ENCODE measurements at regions of chr1 and their contacts with region 1.

Region 1: GRCh38 chr1:84772428-84772943 is 82.2 kb upstream of the SSX2IP start:
- DNase-seq: no peak
- ATAC-seq: peak; percentile 96
- H3K4me3 ChIP-seq: no peak overlapping the region
- H3K27ac ChIP-seq: no peak overlapping the region
- H3K4me1 ChIP-seq: no peaks in the 10 kb centered on the region
- H3K27me3 ChIP-seq: no peaks in the 10 kb centered on the region
- CTCF ChIP-seq: peak; percentile 78 to 89 (median 87)
- EP300 ChIP-seq: no peak
- POLR2A ChIP-seq: no peak
- RAD21 ChIP-seq: peak; percentile 93

Region 2: DNA sequence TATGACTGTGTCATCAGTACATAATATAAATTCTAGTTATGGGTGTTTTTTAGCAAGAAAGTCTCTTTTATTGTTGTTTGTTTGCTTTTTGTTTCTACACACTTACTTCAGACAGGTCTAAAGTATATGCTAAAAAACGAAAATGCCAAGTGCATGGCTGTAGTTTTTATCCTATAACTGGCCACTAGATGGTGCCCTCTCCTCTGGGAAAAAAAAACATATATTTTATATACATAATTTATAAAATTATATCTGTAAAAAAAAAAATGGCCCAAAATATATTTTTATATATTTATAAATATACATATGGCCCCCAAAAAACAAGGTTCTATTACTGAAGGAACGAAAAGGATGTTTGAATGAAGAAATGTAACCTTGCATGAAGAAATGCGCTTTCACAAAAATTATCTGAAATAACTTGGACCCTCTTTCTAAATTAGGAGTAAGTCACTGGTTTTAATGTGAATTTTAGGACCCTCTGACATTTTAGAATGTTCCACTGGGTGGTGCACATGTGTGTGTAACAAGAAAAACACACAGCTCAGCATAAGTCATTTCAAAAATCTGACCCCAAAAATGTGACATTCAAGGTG is 867.1 kb before region 1 on chr1:
- CTCF ChIA-PET with region 1: no interaction called
- POLR2A ChIA-PET with region 1: no interaction called
- RAD21 ChIA-PET with region 1: interaction called, 7 read pairs
- SMC1A ChIA-PET with region 1: no interaction called
- in situ Hi-C with region 1: loop called (anchors 25 kb)
- intact Hi-C with region 1: loop called (anchors 5 kb)
- DNase-seq: no peak
- ATAC-seq: peak; percentile 35; the same call in 1 of the 3 replicates
- H3K4me3 ChIP-seq: no peak overlapping the region
- H3K27ac ChIP-seq: no peak overlapping the region
- H3K4me1 ChIP-seq: no peaks in the 10 kb centered on the region
- H3K27me3 ChIP-seq: no peaks in the 10 kb centered on the region
- CTCF ChIP-seq: peak; percentile 42 to 51 (median 46); a peak in 5 of 6 replicates
- EP300 ChIP-seq: no peak
- POLR2A ChIP-seq: no peak
- RAD21 ChIP-seq: peak; percentile 49

Region 3: DNA sequence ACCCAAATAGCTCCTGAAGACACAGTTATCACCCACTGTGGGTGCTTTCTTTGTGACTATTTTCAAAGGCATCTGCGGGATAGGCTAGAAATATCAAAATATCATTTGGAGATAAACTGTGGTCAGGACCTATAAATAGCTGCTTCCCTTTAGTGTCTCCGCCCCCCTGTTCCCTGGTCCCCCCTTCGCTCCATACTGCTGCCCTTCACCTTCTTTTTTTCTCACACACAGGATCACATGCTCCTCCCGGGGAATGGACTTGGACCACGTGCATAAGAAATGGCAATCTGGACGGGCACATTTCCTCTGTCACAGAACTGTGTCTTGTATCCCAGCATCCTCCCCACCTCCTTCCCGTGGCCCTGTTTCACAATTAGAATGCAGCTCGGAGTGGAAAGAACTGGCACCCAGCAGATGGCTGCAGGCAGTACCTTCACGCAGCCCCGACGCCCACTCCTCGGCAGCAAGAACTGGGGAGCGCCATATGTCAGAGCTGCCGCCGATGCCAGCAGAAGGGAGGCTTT is 13.5 kb before region 1 on chr1:
- CTCF ChIA-PET with region 1: interaction called, 41 read pairs
- POLR2A ChIA-PET with region 1: no interaction called
- RAD21 ChIA-PET with region 1: interaction called, 12 read pairs
- SMC1A ChIA-PET with region 1: interaction called, 10 read pairs
- in situ Hi-C with region 1: no loop called
- intact Hi-C with region 1: no loop called
- DNase-seq: no peak
- ATAC-seq: peak; percentile 54
- H3K4me3 ChIP-seq: no peak overlapping the region
- H3K27ac ChIP-seq: no peak overlapping the region
- H3K4me1 ChIP-seq: no peaks in the 10 kb centered on the region
- H3K27me3 ChIP-seq: peaks cover 0 to 2% of the 10 kb centered on the region in 2 experiments; a peak in 1 of 4 replicates
- CTCF ChIP-seq: no peak
- EP300 ChIP-seq: no peak
- POLR2A ChIP-seq: no peak
- RAD21 ChIP-seq: no peak

Region 4: GRCh38 chr1:84973498-84974334 is 201.2 kb after region 1 on chr1:
- CTCF ChIA-PET with region 1: no interaction called
- POLR2A ChIA-PET with region 1: no interaction called
- RAD21 ChIA-PET with region 1: no interaction called
- SMC1A ChIA-PET with region 1: no interaction called
- in situ Hi-C with region 1: no loop called
- intact Hi-C with region 1: no loop called
- DNase-seq: no peak
- ATAC-seq: peak; percentile 54
- H3K4me3 ChIP-seq: peak overlapping the region; percentile 60
- H3K27ac ChIP-seq: peak overlapping the region; percentile 85
- H3K4me1 ChIP-seq: peaks cover 56% of the 10 kb centered on the region
- H3K27me3 ChIP-seq: no peaks in the 10 kb centered on the region
- CTCF ChIP-seq: peak in 1 of 3 experiments; percentile 31; a peak in 2 of 6 replicates
- EP300 ChIP-seq: no peak
- POLR2A ChIP-seq: no peak
- RAD21 ChIP-seq: peak; percentile 41; the same call in 1 of the 2 replicates